Tibial artery (tissue), 4 donors: ENCODE measurements at regions of chr6 and their contacts with region 1.

Region 1: DNA sequence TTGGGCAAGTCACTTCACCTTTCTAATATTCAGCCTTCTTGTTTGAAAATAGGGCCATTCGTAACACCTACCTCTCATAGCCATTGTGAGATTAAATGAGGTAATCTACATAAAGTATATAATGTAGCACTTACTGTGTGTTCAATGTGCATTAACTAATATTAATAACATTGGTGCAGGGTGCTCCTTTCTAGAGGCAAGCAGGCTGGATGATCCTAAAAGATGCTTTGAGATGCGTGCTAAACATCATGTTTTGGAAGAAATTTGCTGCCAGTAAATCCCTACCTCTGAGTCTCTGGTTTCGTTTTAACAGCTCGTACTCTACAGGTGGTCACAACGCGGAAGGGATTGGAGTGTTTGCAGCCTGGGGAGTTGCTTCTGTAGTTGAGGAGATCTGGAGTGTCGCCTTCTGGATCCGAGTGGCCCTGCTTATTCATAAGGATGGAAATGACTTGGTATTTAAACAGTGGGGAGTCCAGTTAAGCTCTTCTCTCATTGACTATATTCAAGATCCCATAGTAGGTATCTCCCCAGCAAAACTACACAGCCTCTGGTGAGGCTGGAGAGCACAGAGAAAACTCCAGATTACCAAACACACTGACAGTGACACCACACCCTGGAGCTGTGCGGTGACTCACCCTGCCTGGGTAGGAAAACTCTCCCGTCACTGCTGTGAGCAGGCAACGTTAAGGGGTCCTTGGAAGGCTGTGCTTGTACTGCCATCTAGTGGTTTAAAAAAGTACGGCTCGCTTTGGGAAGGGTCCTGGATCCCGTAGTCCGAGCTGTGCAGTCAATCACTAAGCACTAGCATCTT is 107.9 kb downstream of the MAP3K7 start:
- DNase-seq: peak; percentile 93
- H3K4me3 ChIP-seq: no peak overlapping the region
- H3K27ac ChIP-seq: no peak overlapping the region
- H3K4me1 ChIP-seq: peaks cover 0 to 7% (median 4%) of the 10 kb centered on the region in 4 donors
- H3K27me3 ChIP-seq: no peaks in the 10 kb centered on the region
- CTCF ChIP-seq: peak; percentile 89 to 93

Region 2: DNA sequence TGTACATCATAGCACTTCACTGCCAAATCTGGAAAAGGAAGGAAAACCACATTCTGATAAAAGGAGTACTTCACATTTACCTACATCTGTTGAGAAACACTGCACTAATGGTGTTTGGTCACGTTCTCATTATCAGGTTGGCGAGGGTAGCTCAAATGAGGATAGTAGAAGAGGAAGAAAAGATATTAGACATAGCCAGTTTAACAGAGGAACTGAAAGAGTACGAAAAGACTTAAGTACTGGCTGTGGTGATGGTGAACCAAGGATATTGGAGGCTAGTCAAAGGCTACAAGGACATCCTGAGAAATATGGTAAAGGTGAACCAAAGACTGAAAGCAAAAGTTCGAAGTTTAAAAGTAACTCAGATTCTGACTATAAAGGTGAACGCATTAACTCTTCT is 616.7 kb before region 1 on chr6:
- intact Hi-C with region 1: no loop called
- DNase-seq: no peak
- H3K4me3 ChIP-seq: no peak overlapping the region
- H3K27ac ChIP-seq: no peak overlapping the region
- H3K4me1 ChIP-seq: no peaks in the 10 kb centered on the region
- H3K27me3 ChIP-seq: no peaks in the 10 kb centered on the region
- CTCF ChIP-seq: no peak

Region 3: GRCh38 chr6:89940225-89941027 is 538.6 kb before region 1 on chr6:
- intact Hi-C with region 1: loop called (anchors 5 kb)
- DNase-seq: peak; percentile 74 to 84
- H3K4me3 ChIP-seq: no peak overlapping the region
- H3K27ac ChIP-seq: no peak overlapping the region
- H3K4me1 ChIP-seq: peaks cover 0 to 19% (median 7%) of the 10 kb centered on the region in 4 donors
- H3K27me3 ChIP-seq: no peaks in the 10 kb centered on the region
- CTCF ChIP-seq: peak; percentile 56 to 65

Region 4: GRCh38 chr6:90098001-90098531 is 380.9 kb before region 1 on chr6:
- intact Hi-C with region 1: loop called (anchors 10 kb)
- DNase-seq: peak; percentile 91 to 95
- H3K4me3 ChIP-seq: no peak overlapping the region
- H3K27ac ChIP-seq: peak overlapping the region; percentile 70 to 83
- H3K4me1 ChIP-seq: peaks cover 0 to 53% (median 27%) of the 10 kb centered on the region in 4 donors
- H3K27me3 ChIP-seq: no peaks in the 10 kb centered on the region
- CTCF ChIP-seq: peak; percentile 43 to 52

Region 5: GRCh38 chr6:90393232-90393884 is 85.6 kb before region 1 on chr6:
- intact Hi-C with region 1: loop called (anchors 10 kb)
- DNase-seq: peak in 1 of 2 donors; percentile 46
- H3K4me3 ChIP-seq: no peak overlapping the region
- H3K27ac ChIP-seq: no peak overlapping the region
- H3K4me1 ChIP-seq: no peaks in the 10 kb centered on the region
- H3K27me3 ChIP-seq: no peaks in the 10 kb centered on the region
- CTCF ChIP-seq: peak; percentile 76 to 84